Left cardiac atrium (tissue), 4 donors: ENCODE measurements at regions of chr3 and their contacts with region 1.

Region 1: GRCh38 chr3:48439820-48440589 is at the starts of genes CCDC51 and TMA7:
- DNase-seq: peak; percentile 99
- ATAC-seq: peak; percentile 98 to 100
- total RNA-seq, gene CCDC51: 7.0 to 10.9 TPM
- total RNA-seq, gene TMA7: 190 to 238 TPM

Region 2: DNA sequence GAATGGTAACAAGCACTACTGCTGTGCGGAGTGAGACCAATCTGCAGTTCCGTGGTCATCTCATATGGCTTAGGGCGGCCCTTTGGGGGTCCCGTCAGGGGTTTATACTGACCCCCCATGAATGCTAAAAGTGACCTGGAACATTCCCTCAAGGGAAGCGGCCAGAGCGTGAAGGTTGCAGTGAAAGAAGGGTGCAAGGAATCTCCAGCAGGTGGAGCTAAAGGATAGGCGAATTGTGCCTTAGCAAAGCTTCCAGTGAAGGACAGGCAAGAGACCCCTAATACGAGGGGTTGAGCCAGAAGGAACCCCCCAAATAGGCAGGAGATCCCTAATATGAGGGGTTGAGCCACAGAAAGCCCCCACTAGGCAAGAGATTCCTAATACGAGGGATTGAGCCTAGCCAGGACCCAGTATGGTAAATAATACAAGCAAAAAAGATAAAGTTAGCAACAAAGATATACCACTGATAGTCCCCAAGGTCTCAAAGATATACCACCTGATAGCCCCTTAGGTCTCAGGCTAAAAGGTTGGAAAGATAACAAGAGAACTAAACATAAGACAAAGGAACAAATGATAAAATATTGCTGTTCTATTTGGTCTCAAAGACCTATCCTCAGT is 166.3 kb before region 1 on chr3:
- intact Hi-C with region 1: loop called (anchors 1 to 5 kb)
- DNase-seq: no peak
- ATAC-seq: peak in 1 of 2 donors; percentile 66

Region 3: GRCh38 chr3:48400824-48401433 is 39.1 kb before region 1 on chr3:
- intact Hi-C with region 1: loop called (anchors 1 kb)
- DNase-seq: peak; percentile 49
- ATAC-seq: peak; percentile 62